ENCODE measurements at regions of chr12 and their contacts with region 1.

Region 1: DNA sequence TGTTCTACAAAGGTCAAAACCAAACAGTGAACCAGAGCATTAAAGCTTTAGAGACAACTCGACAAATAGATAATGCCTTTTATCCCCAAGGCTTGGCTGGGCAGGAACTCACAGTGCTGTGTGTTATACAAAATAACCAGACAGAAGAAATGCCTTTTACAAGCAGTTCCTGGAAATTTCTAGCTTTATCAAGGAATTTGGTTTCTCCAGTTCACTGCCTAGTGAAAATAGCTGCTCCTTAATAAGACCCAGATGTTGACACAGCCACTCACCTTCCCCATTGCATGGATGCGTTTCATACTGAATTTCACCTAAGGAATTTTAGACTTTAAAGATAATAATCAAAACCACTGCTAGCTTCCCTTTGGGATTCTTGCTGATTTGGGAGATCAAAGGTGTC is 162.1 kb downstream of the C12orf75 start:
- DNase-seq: peak in 1 of 2 experiments; percentile 58
- H3K4me3 ChIP-seq: no peak overlapping the region
- H3K27ac ChIP-seq: no peak overlapping the region
- H3K4me1 ChIP-seq: no peaks in the 10 kb centered on the region
- H3K27me3 ChIP-seq: no peaks in the 10 kb centered on the region
- CTCF ChIP-seq: no peak

Region 2: GRCh38 chr12:105221583-105222283 is 270.9 kb before region 1 on chr12:
- CTCF ChIA-PET with region 1: no interaction called
- POLR2A ChIA-PET with region 1: no interaction called
- intact Hi-C with region 1: no loop called
- DNase-seq: no peak
- H3K4me3 ChIP-seq: no peak overlapping the region
- H3K27ac ChIP-seq: no peak overlapping the region
- H3K4me1 ChIP-seq: peaks cover 5% of the 10 kb centered on the region; the same call in 1 of the 2 replicates
- H3K27me3 ChIP-seq: no peaks in the 10 kb centered on the region
- CTCF ChIP-seq: no peak

Region 3: GRCh38 chr12:105330283-105330930 is 162.2 kb before region 1 on chr12 and contains the start of gene C12orf75:
- CTCF ChIA-PET with region 1: no interaction called
- POLR2A ChIA-PET with region 1: no interaction called
- intact Hi-C with region 1: no loop called
- DNase-seq: no peak
- H3K4me3 ChIP-seq: no peak within 1 kb of the TSS
- H3K27ac ChIP-seq: no peak within 1 kb of the TSS
- H3K4me1 ChIP-seq: no peaks in the 10 kb centered on the region
- H3K27me3 ChIP-seq: no peaks in the 10 kb centered on the region; the same call in 1 of the 2 replicates
- CTCF ChIP-seq: no peak
- total RNA-seq, gene C12orf75: 0.83 and 1.3 TPM in 2 replicates

Region 4: DNA sequence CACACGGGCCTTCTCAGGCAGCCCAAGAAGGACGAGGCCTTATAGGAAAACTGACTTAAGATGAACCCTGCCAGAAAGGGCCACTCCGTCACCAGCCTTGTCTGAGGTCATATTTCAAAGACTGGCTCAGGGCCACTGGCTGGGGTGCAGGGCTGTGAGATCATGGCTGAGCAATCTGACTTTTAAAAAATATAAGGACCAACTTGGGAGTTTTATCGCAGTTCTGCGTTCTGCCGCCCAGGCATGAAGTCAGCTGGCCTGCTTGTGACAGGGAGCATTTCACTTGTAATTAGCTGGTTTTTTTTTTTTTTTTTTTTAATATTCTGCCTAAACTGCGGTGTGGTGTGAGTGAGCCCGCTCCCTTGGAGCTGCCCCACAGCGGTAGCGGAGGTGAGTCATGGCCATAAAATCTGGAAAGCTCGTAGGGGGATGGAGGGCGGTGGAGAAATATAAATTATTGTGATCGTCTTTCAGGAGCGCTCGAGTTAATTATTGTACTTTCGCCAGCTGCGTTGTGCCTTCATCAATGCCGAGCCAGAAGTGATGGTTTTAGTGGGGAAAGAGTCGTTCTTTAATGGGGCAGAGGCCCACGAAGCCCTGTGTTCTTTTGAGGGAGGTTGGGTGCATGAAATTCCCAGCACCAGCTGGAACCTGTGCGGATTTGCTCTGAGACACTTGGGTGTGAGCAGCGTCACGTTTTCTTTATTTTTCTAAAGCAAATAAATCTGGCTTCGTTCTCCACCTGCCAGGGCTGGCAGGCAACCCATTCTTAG is 69.8 kb after region 1 on chr12:
- CTCF ChIA-PET with region 1: no interaction called
- POLR2A ChIA-PET with region 1: interaction called, 16 read pairs
- intact Hi-C with region 1: no loop called
- DNase-seq: peak; percentile 66 to 84
- H3K4me3 ChIP-seq: peak overlapping the region; percentile 55; the same call in 1 of the 2 replicates
- H3K27ac ChIP-seq: peak overlapping the region; percentile 74
- H3K4me1 ChIP-seq: peaks cover 26% of the 10 kb centered on the region
- H3K27me3 ChIP-seq: no peaks in the 10 kb centered on the region
- CTCF ChIP-seq: no peak

Measured in PC-9 (cell line).